Left ventricle myocardium inferior (tissue), 1 donor: ENCODE measurements at regions of chr15 and their contacts with region 1.

Region 1: DNA sequence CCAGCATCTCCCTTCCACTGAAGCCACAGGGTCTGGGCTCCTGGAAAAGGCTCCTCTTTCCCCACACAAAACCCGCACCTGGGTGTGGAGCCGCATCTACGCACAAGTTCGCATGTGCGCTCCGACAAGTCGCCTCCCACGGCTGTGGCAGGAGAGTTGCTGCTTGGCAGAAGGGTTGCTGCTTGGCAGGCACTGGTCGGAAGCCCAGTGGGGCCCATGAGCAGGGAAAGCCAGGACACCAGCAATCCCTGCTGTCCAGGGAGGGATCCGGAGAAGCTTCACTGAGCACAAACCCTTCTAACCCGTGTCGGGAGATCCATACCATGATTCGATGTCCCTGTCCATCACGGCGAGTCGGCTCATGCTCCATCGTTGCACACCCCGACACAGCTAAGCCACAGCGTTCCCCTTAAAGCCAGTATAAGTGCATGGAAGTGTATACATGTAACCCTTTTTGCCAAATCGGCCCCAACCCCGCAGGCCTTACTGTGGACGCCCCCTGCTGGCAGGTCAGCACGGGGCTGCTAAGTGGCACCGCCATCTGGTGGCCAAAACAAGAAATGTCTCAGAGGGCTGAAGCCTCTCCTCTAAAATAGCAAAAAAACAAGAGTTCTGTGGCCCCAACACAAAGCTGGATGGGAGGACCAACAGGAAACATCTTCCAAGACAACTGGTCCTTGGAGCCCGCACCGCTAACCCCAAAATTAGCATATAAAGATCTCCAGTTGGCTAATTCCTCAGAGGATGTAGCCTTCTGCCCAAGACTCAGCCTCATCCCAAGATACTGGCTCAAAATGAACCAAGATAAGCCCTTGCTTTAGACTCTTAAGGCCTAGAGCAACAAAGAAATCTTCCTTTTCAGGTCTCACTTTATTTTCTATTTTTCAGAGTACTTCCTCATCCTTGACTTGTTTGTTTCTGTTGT is 8.3 kb downstream of the ANKRD63 start:
- DNase-seq: peak; percentile 71
- H3K4me3 ChIP-seq: no peak overlapping the region
- H3K27ac ChIP-seq: no peak overlapping the region
- H3K4me1 ChIP-seq: peaks cover 11% of the 10 kb centered on the region
- H3K27me3 ChIP-seq: peaks cover 36% of the 10 kb centered on the region
- CTCF ChIP-seq: peak; percentile 100

Region 2: DNA sequence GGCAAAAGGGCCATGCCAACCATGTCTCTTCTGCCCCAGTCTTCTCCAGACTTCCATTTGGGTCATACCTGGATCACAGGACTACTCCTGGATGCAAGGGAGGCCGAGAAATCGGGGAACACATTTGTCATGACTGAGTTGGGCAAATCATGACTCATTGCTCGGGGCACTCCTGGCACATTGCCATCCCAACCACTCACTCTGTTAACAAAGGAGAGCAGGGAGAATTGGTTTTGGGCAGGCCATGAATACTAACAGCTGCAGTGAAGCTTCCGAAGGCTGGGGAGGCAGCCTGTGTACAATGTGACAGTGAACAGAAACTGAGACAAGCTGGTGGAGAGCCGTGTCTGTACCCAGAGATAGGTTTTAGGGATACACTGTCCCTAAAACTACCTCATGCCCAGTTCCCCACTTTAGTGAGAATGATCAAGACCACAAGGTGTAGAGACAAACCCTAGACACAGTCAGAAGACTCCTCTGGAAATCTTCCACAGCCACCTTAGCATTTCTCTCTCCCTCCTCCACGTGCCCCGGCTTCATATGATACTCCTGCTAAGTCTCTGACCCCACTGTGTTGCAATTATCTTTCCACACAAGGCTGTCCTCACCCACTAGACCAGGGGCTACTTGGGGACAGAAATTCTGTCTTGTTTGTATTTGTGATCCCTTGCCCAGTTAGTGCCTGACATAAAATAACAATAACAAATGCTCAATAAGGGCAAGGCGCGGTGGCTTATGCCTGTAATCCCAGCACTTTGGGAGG is 124.3 kb before region 1 on chr15:
- intact Hi-C with region 1: no loop called
- DNase-seq: no peak
- H3K4me3 ChIP-seq: no peak overlapping the region
- H3K27ac ChIP-seq: no peak overlapping the region
- H3K4me1 ChIP-seq: no peaks in the 10 kb centered on the region
- H3K27me3 ChIP-seq: peaks cover 4% of the 10 kb centered on the region
- CTCF ChIP-seq: no peak

Region 3: DNA sequence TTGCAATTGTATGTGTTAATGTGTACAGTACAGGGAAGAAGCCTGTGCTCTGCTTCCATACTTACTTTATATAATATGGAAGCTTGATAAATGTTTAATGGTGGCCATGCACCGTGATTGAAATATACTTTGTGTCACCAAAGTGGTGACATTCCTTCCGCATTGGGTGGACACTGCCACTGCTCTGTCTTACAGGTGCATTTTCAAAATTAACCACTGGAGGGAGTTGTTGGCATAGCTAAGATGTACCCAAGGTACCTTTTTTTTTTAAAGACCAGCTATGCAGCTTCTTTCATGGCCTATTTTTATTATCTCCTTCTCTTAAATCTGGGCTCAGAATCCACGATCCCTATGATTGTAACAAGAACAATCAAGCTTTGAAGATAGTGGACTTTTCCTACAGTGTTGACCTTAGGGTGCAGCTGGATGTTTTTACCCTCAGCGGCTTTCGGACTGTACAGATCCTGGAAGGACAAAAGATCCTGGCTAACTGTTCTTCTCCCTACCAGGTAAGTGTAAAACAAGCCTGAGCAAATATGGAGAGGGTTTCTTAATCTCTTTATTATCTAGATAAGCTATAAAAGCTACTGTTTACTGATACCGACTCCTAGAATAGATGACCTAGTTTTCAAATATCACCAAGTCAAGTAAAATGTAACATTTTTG is 57.3 kb before region 1 on chr15:
- intact Hi-C with region 1: loop called (anchors 5 kb)
- DNase-seq: no peak
- H3K4me3 ChIP-seq: no peak overlapping the region
- H3K27ac ChIP-seq: no peak overlapping the region
- H3K4me1 ChIP-seq: no peaks in the 10 kb centered on the region
- H3K27me3 ChIP-seq: no peaks in the 10 kb centered on the region
- CTCF ChIP-seq: peak; percentile 90

Region 4: GRCh38 chr15:40405501-40406381 is 131.1 kb after region 1 on chr15 and contains the start of gene IVD:
- intact Hi-C with region 1: no loop called
- DNase-seq: peak; percentile 95
- H3K4me3 ChIP-seq: peak within 1 kb of the TSS; percentile 84
- H3K27ac ChIP-seq: peak within 1 kb of the TSS; percentile 84
- H3K4me1 ChIP-seq: peaks cover 28% of the 10 kb centered on the region
- H3K27me3 ChIP-seq: no peaks in the 10 kb centered on the region
- CTCF ChIP-seq: no peak
- total RNA-seq, gene IVD: 106 TPM

Region 5: GRCh38 chr15:40506964-40507571 is 232.5 kb after region 1 on chr15:
- intact Hi-C with region 1: no loop called
- DNase-seq: peak; percentile 78
- H3K4me3 ChIP-seq: peak overlapping the region; percentile 56
- H3K27ac ChIP-seq: peak overlapping the region; percentile 39
- H3K4me1 ChIP-seq: peaks cover 31% of the 10 kb centered on the region
- H3K27me3 ChIP-seq: no peaks in the 10 kb centered on the region
- CTCF ChIP-seq: peak; percentile 82